ENCODE measurements at regions of chr6 and their contacts with region 1.

Region 1: DNA sequence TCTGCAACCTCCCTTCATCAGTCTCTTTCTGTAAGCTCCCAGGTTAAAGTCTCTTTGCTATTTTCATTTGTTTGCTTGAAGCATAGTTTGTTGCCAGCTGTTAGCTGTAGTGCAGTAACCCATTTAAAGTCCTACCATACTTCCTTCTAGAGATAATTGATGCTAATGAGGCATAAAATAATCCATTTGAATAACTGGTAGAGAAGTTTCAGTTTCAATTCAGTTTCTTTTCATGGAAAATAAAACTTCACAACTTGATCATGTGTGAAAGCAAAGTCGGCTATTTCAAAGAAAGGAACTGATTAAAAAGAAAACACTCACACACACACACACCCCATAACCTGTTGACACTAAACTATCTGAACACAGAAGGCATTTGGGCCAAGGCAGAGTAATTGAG is 68.5 kb upstream of the TENT5A start:
- DNase-seq: no peak
- ATAC-seq: peak; percentile 69 to 83 (median 73)
- H3K4me3 ChIP-seq: peak overlapping the region; percentile 8 to 31 (median 23)
- H3K27ac ChIP-seq: peak overlapping the region in 2 of 3 donors; percentile 2 to 8
- H3K4me1 ChIP-seq: peaks cover 0 to 19% (median 1%) of the 10 kb centered on the region in 4 donors
- H3K27me3 ChIP-seq: no peaks in the 10 kb centered on the region
- CTCF ChIP-seq: no peak
- POLR2A ChIP-seq: no peak

Region 2: GRCh38 chr6:81772741-81773140 is 48.2 kb before region 1 on chr6:
- intact Hi-C with region 1: loop called in 1 of 2 experiments (anchors 10 kb)
- DNase-seq: no peak
- ATAC-seq: no peak
- H3K4me3 ChIP-seq: no peak overlapping the region
- H3K27ac ChIP-seq: no peak overlapping the region
- H3K4me1 ChIP-seq: peaks cover 0 to 22% (median 5%) of the 10 kb centered on the region in 4 donors
- H3K27me3 ChIP-seq: no peaks in the 10 kb centered on the region
- CTCF ChIP-seq: no peak
- POLR2A ChIP-seq: no peak